Natural killer cell (primary cell): ENCODE measurements at regions of chr1 and their contacts with region 1.

Region 1: DNA sequence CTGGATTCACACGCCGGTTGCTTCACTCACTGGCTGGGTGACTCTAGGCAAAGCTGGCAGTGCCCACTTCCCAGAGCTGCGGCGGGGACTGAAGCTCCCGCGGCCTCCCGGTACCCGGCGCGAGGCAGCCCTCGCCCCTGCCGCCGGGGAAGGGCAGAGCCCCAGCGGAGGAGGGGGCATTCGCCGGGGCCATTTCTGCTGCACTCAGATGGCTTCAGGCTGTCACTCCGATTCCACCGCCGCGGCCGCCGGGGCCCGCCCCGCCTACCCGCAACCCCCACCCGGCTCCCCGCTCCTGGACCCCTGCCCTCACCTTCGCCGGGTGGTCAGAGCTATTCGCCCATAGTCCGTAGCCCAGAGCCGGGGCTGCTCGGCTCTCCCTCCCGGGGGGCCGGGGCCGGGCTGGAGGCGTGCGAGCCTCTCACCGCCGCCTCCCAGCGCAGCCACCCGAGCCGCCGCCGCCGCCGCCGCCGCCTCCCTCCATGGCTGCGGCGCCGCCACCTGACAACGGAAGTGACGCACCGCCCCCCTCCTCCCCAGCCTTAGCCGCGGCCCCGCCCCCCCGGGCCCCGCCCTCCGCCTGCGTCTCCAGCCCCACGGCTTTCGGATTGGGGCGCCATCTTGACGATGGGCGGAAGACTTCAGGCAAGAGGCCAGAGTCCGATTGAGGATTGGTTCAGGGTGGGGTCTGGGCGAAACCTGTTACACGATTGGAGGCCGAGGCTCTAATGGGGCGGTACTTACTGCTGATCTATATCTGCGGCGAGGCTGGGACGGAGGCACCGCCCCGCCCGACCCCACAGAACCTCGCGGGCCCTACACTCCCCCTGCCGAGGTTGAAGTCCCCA is at the start of gene STK40:
- DNase-seq: peak; percentile 91 to 99
- ATAC-seq: peak; percentile 80 to 96 (median 87)
- H3K4me3 ChIP-seq: peak within 1 kb of the TSS; percentile 59
- H3K4me3 Mint-ChIP-seq: peak within 1 kb of the TSS; percentile 89
- H3K27ac ChIP-seq: peak within 1 kb of the TSS; percentile 96
- H3K27ac Mint-ChIP-seq: peak within 1 kb of the TSS; percentile 98 to 99
- H3K4me1 ChIP-seq: peaks cover 54% of the 10 kb centered on the region
- H3K4me1 Mint-ChIP-seq: peaks cover 48 to 62% of the 10 kb centered on the region in 2 donors
- H3K27me3 ChIP-seq: no peaks in the 10 kb centered on the region
- H3K27me3 Mint-ChIP-seq: no peaks in the 10 kb centered on the region
- CTCF ChIP-seq: no peak
- total RNA-seq, gene STK40: 55.9 to 65.3 (median 59.8) TPM

Region 2: GRCh38 chr1:36223993-36224536 is 161.6 kb before region 1 on chr1 and contains the start of gene THRAP3:
- intact Hi-C with region 1: loop called (anchors 5 kb)
- DNase-seq: peak; percentile 99 to 100
- ATAC-seq: peak; percentile 83 to 94 (median 84)
- H3K4me3 ChIP-seq: peak within 1 kb of the TSS; percentile 78
- H3K4me3 Mint-ChIP-seq: peak within 1 kb of the TSS; percentile 98
- H3K27ac ChIP-seq: peak within 1 kb of the TSS; percentile 95
- H3K27ac Mint-ChIP-seq: peak within 1 kb of the TSS; percentile 99 to 100
- H3K4me1 ChIP-seq: peaks cover 25% of the 10 kb centered on the region
- H3K4me1 Mint-ChIP-seq: peaks cover 38 to 44% of the 10 kb centered on the region in 2 donors
- H3K27me3 ChIP-seq: no peaks in the 10 kb centered on the region
- H3K27me3 Mint-ChIP-seq: no peaks in the 10 kb centered on the region
- CTCF ChIP-seq: no peak
- total RNA-seq, gene THRAP3: 88.6 to 110 (median 97.4) TPM

Region 3: GRCh38 chr1:36397378-36398230 is 12.0 kb after region 1 on chr1 and contains the start of gene LSM10:
- intact Hi-C with region 1: loop called (anchors 1 kb)
- DNase-seq: peak; percentile 85 to 96
- ATAC-seq: peak; percentile 59 to 72 (median 60)
- H3K4me3 ChIP-seq: peak within 1 kb of the TSS; percentile 98
- H3K4me3 Mint-ChIP-seq: peak within 1 kb of the TSS; percentile 100
- H3K27ac ChIP-seq: peak within 1 kb of the TSS; percentile 93
- H3K27ac Mint-ChIP-seq: peak within 1 kb of the TSS; percentile 99 to 100
- H3K4me1 ChIP-seq: peaks cover 55% of the 10 kb centered on the region
- H3K4me1 Mint-ChIP-seq: peaks cover 46 to 48% of the 10 kb centered on the region in 2 donors
- H3K27me3 ChIP-seq: no peaks in the 10 kb centered on the region
- H3K27me3 Mint-ChIP-seq: no peaks in the 10 kb centered on the region
- CTCF ChIP-seq: no peak
- total RNA-seq, gene LSM10: 25.2 to 30.4 (median 26.6) TPM

Region 4: DNA sequence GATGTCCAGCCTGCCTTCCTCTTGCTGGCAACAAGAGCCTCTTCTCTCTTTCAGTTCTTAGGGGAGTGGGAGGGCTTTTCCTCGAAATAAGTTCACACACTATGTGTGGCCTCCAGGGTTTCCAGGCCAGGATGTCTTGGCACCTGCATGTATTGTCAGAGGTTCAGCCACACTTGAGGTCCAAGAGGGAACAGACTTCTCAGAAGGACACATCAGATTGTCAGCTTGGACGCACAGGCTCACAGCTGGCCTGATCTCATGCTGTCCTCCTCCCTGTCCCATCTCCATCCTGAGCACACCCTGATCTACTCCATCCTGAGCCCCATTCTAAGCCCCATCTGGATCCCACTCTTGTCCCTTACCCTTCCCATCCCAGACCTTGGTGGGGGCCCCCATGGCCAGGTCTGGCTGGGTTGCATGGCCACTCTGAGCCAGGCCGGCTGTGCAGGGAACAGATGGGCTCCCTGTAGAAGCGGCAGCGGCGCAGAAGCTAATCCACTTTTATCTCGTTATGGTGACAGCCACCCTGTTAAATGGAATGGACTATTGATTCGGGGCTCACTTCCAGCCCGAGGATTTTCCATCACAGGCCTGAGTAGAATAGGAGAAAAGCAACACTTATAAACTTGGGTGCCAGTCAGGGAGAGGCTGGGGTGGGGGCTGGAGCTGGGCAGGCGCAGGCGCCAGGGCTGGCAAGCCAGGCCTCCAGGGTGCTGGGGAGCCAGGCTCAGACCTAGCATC is 182.1 kb after region 1 on chr1:
- intact Hi-C with region 1: no loop called
- DNase-seq: no peak
- ATAC-seq: no peak
- H3K4me3 ChIP-seq: no peak overlapping the region
- H3K4me3 Mint-ChIP-seq: no peak overlapping the region
- H3K27ac ChIP-seq: no peak overlapping the region
- H3K27ac Mint-ChIP-seq: no peak overlapping the region
- H3K4me1 ChIP-seq: no peaks in the 10 kb centered on the region
- H3K4me1 Mint-ChIP-seq: no peaks in the 10 kb centered on the region
- H3K27me3 ChIP-seq: no peaks in the 10 kb centered on the region
- H3K27me3 Mint-ChIP-seq: peaks cover 8 to 12% of the 10 kb centered on the region in 2 donors
- CTCF ChIP-seq: no peak